Colonic mucosa (tissue), 4 donors: ENCODE measurements at regions of chr3 and their contacts with region 1.

Region 1: DNA sequence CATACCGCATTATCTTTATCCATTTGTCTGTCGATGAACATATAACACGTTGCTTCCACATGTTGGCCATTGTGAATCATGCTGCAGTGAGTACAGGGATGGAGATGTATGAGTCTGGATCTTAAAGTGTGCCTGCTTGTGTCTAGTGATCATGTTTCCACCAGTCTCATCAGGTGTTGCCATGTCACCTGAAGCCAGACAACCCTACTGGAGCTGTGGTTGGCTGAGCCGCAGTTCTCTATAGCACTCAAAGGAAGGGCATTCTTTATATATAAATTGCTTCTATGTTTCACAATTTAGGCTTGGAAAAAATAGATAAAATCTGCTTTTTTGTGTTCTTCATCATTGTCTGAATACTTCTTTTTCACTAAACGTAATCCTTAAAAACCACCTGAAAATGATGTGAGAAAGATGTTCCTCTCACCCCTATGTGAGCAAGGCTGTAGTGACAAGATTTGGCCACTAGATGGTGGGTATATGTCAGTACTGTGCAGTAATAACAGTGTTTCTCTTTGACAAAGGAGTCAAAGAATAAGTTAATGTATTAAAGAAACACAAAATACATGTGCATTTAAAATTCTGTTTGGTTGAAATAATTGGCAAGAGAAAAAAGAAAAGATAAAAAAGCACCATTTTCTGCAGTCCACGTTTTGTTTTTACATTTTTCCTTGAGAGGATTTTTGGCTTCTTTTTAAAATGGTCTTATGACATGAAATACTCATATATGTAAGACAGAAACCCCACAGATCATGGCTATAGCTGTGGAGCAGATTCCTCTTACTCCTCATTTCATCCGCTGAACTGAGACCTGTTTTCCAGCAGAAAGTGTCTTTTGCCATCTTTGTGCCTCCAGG is 394.5 kb upstream of the DPPA4 start:
- DNase-seq: peak; percentile 60
- H3K4me3 ChIP-seq: no peak overlapping the region
- H3K27ac ChIP-seq: no peak overlapping the region
- H3K4me1 ChIP-seq: no peaks in the 10 kb centered on the region
- H3K27me3 ChIP-seq: no peaks in the 10 kb centered on the region
- CTCF ChIP-seq: peak; percentile 85

Region 2: GRCh38 chr3:109930582-109930981 is 198.7 kb after region 1 on chr3:
- intact Hi-C with region 1: no loop called
- DNase-seq: no peak
- H3K4me3 ChIP-seq: no peak overlapping the region
- H3K27ac ChIP-seq: no peak overlapping the region
- H3K4me1 ChIP-seq: no peaks in the 10 kb centered on the region
- H3K27me3 ChIP-seq: no peaks in the 10 kb centered on the region
- CTCF ChIP-seq: no peak

Region 3: GRCh38 chr3:110314512-110315114 is 582.8 kb after region 1 on chr3:
- intact Hi-C with region 1: loop called (anchors 10 kb)
- DNase-seq: peak; percentile 69
- H3K4me3 ChIP-seq: no peak overlapping the region
- H3K27ac ChIP-seq: no peak overlapping the region
- H3K4me1 ChIP-seq: no peaks in the 10 kb centered on the region
- H3K27me3 ChIP-seq: no peaks in the 10 kb centered on the region
- CTCF ChIP-seq: peak; percentile 74